ENCODE measurements at regions of chr7 and their contacts with region 1.

Region 1: GRCh38 chr7:90155206-90155605 is 937 bp downstream of the STEAP1 start:
- DNase-seq: no peak
- H3K4me3 ChIP-seq: no peak overlapping the region
- H3K27ac ChIP-seq: no peak overlapping the region
- H3K4me1 ChIP-seq: no peaks in the 10 kb centered on the region
- H3K27me3 ChIP-seq: no peaks in the 10 kb centered on the region
- CTCF ChIP-seq: no peak
- POLR2A ChIP-seq: no peak

Region 2: DNA sequence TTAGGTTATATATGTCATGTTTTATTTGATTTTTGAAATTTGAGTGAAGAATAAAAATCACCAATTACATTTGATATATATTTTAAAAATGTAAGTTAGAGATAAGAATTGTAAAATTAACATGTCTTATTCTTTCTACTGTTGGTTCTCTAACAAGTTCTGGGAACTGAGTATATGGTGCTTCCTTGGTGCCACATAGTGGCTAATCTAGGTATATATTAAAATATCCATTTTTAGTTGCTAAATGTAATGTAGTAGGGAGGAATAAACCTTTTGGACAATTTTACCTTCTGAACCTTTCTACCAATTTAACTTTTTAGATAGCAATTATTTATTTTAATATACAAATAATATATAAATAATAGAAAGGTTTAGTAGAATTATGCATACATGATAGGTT is 107.2 kb after region 1 on chr7:
- intact Hi-C with region 1: loop called (anchors 10 kb)
- DNase-seq: no peak
- H3K4me3 ChIP-seq: no peak overlapping the region
- H3K27ac ChIP-seq: no peak overlapping the region
- H3K4me1 ChIP-seq: no peaks in the 10 kb centered on the region
- H3K27me3 ChIP-seq: no peaks in the 10 kb centered on the region
- CTCF ChIP-seq: peak; percentile 41 to 48 (median 42)
- POLR2A ChIP-seq: no peak

Region 3: DNA sequence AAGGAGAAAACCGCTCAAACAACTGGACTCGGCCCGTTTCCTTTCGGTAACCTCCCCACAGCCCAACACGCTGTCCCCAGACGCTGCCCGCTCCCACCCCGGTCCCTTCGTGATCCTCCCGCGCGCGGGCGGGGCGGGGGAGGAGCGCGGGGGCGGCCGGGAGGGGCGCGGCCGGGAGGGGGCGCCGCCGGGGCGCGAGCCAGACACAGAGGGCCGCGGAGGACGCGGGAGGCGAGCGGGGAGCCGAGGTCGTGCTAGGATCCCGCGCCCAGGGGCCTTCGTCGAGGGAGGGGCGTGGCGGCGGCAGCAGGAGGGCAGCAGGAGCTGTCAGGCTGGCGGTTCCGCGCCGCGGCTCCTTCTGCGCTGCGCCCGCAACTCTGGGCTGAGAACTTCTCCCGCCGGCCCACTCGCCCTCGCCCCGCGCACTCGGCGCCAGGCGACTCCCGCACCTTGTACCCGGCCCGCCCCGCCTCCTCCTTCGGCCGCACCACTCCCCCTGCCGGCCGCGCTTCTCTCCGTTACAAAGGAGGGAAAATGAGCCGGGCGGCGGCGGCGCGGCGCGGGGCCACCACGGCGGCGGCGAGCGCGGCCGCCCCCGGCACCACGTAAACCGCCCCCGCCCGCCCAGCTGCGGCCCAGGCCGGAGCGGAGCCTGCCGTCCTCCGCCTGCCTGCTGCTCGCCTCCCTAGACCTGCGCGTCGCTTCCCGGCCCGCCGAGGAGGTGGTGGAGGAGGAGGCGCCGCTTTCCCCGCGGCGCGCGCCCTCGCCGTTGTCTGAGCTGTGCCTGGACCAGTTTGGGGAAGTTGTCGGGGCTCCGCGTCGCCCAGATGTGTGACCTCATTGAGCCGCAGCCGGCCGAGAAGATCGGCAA is 440.8 kb after region 1 on chr7 and contains the start of gene CDK14:
- intact Hi-C with region 1: no loop called
- DNase-seq: peak; percentile 77 to 79
- H3K4me3 ChIP-seq: peak within 1 kb of the TSS; percentile 61 to 70
- H3K27ac ChIP-seq: peak within 1 kb of the TSS; percentile 86 to 92
- H3K4me1 ChIP-seq: no peaks in the 10 kb centered on the region
- H3K27me3 ChIP-seq: no peaks in the 10 kb centered on the region
- CTCF ChIP-seq: peak in 3 of 4 experiments; percentile 39 to 75 (median 45)
- POLR2A ChIP-seq: peak in 1 of 2 donors; percentile 43
- total RNA-seq, gene CDK14: 3.3 to 61.6 (median 38.7) TPM